ENCODE measurements at regions of chr4 and their contacts with region 1.

Region 1: DNA sequence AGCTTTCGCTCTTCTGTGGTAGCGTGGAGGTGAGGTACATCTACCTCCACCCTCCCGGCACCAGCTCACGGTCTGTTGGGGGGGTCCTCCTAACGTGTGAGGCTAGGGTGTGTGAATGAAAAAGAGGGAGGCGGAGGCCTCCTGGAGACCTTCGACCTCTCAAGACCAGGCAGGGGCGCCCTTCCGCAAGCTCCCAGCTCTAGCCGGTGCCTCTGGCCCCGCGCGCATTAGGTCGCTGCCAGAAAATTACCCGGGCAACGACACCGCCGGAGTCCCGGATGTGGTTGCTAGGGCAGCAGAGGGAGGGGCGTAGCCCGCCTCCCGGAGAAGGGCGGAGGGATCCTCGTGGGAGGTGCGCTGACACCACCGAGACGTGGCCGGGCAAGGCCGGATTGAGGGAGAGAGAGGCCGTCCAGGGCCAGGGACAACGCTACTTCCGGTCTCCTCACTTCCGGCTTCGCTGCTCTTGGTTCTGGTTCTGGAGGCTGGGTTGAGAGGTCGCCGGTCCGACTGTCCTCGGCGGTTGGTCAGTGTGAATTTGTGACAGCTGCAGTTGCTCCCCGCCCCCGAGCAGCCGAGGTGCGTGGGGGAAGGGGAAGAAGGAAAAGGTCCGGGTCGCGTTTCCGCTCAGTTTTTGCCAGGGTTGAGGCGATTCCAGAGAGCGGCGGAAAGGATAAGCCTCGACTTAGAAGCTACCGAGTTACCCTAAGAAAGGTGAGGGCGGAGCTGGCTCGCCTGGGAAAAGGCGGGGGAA is at the starts of genes ARFIP1 and TIGD4:
- DNase-seq: peak; percentile 97
- ATAC-seq: peak; percentile 91
- H3K4me3 Mint-ChIP-seq: peak within 1 kb of the TSS; percentile 96
- H3K27ac Mint-ChIP-seq: peak within 1 kb of the TSS; percentile 94
- H3K4me1 Mint-ChIP-seq: peaks cover 44% of the 10 kb centered on the region
- H3K27me3 Mint-ChIP-seq: peaks cover 5% of the 10 kb centered on the region
- total RNA-seq, gene ARFIP1: 8.4 to 10.5 TPM
- total RNA-seq, gene TIGD4: 0.27 to 0.28 TPM

Region 2: GRCh38 chr4:151015459-151016347 is 1764.0 kb before region 1 on chr4:
- CTCF ChIA-PET with region 1: no interaction called
- POLR2A ChIA-PET with region 1: no interaction called
- intact Hi-C with region 1: loop called in 1 of 2 experiments (anchors 5 kb)
- DNase-seq: peak; percentile 89
- ATAC-seq: peak; percentile 81
- H3K4me3 Mint-ChIP-seq: peak overlapping the region; percentile 90
- H3K27ac Mint-ChIP-seq: peak overlapping the region; percentile 99
- H3K4me1 Mint-ChIP-seq: peaks cover 24% of the 10 kb centered on the region
- H3K27me3 Mint-ChIP-seq: no peaks in the 10 kb centered on the region

Region 3: DNA sequence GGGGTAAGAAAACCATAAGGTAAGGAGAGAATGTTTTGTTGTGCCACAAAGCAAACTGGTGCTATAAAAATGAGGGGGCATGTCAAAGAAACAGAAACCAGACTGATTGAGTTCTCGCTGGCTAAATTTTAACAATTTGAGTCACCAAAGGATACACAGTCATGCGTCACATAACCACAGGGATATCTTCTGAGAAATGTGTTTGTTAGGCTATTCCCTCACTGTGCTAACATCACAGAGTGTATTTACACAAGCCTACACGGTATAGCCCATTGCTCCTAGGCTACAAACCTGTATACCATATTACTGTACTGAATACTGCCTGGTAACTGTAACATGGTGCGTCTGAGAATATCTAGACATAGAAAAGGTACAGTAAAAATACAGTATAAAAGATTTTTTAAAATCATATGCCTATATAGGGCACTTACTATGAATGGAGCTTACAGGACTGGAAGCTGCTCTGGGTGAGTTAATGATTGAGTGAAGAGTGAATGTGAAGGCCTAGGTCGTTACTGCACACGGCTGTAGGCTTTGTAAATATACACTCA is 293.9 kb before region 1 on chr4:
- CTCF ChIA-PET with region 1: interaction called, 4 read pairs
- POLR2A ChIA-PET with region 1: no interaction called
- intact Hi-C with region 1: loop called in 1 of 2 experiments (anchors 1 kb)
- DNase-seq: peak; percentile 25
- ATAC-seq: peak; percentile 100
- H3K4me3 Mint-ChIP-seq: no peak overlapping the region
- H3K27ac Mint-ChIP-seq: no peak overlapping the region
- H3K4me1 Mint-ChIP-seq: peaks cover 43% of the 10 kb centered on the region
- H3K27me3 Mint-ChIP-seq: no peaks in the 10 kb centered on the region

Region 4: GRCh38 chr4:152807294-152807829 is 27.7 kb after region 1 on chr4:
- CTCF ChIA-PET with region 1: interaction called, 4 read pairs
- POLR2A ChIA-PET with region 1: no interaction called
- intact Hi-C with region 1: loop called in 1 of 2 experiments (anchors 1 kb)
- DNase-seq: no peak
- ATAC-seq: peak; percentile 86
- H3K4me3 Mint-ChIP-seq: peak overlapping the region; percentile 22
- H3K27ac Mint-ChIP-seq: peak overlapping the region; percentile 72
- H3K4me1 Mint-ChIP-seq: peaks cover 19% of the 10 kb centered on the region
- H3K27me3 Mint-ChIP-seq: no peaks in the 10 kb centered on the region

Region 5: DNA sequence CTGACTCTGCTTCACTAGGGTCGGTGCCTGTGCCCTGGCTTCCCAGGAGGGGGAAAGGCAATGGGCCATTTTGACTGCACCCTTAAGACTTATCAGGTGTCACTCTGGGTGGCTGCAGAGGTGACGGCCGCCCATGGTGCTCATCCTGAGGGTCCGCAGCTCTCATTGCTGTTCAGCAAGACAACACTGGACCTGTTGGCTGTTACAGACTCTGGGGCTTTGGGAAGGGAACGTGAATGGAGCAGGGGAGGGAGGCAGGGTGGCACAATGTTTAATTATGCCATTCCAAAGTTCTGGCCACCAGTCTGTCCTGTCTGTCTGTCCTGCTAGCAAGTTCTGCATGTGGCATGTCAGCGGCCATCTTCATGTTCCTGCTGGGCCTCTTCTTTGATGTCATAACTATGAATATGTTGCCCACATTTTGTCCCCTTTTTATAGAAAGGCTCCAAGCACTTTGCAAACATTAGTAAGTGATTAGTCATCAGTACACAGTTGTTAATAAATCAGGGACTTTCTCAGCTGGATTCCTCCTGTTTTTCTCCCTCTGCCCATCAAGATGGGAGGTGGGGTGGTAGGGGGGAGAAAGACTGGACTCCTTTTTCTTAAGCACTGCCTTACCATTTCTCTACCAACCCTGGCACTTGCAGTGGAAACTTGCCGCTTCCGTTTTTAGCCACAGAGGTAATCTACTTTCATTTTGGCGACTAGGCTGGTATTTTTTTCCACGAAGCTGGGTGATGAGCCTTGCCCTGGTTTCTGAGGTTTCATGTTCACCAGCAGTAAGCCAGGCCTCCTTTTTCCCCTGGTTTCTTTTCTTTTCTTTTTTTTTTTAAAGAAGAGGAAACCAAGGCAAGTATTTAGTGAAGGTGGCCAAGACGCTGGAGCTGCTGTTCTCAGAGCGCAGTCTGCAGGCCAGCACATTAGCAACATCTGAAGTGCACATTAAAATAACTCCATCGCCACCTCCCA is 335.9 kb after region 1 on chr4:
- CTCF ChIA-PET with region 1: no interaction called
- POLR2A ChIA-PET with region 1: no interaction called
- intact Hi-C with region 1: loop called in 1 of 2 experiments (anchors 1 kb)
- DNase-seq: peak; percentile 87
- ATAC-seq: peak; percentile 59
- H3K4me3 Mint-ChIP-seq: no peak overlapping the region
- H3K27ac Mint-ChIP-seq: no peak overlapping the region
- H3K4me1 Mint-ChIP-seq: peaks cover 2% of the 10 kb centered on the region
- H3K27me3 Mint-ChIP-seq: no peaks in the 10 kb centered on the region